Endothelial cell of umbilical vein (primary cell): ENCODE measurements at regions of chr1 and their contacts with region 1.

Region 1: DNA sequence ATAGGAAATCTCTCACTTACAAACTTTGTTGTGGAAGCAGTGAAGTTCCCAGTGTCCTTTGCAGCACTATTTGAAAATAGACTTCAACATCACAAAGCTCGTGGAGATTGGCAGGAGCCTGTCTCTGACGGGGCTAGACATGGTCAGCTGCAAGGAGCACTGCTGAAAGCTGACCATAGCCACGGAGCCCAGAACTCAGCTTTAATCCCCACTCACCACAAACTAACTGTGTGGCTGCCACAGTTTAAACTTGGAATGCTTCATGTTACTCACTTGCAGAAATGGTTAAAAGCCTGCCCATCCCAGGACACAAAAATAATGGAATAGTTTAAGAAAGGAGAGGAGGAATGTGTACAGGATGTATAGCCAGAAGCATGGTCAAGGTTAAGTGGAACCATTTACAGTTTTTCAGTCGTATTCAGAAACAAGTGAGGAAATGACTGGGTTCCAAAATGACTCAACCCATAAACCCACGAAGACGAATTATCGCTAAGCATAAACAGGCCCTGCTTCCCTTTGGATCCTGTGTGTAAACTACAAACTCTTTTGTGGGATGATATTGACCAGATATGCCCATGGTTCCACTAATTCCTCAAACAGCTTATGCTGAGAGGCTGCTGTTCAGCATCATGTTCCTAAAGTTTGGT is 18.2 kb downstream of the DNALI1 start:
- DNase-seq: peak; percentile 81
- H3K4me3 ChIP-seq: no peak overlapping the region
- H3K27ac ChIP-seq: peak overlapping the region; percentile 72
- H3K4me1 ChIP-seq: peaks cover 36% of the 10 kb centered on the region
- H3K27me3 ChIP-seq: no peaks in the 10 kb centered on the region
- CTCF ChIP-seq: no peak
- POLR2A ChIP-seq: no peak

Region 2: DNA sequence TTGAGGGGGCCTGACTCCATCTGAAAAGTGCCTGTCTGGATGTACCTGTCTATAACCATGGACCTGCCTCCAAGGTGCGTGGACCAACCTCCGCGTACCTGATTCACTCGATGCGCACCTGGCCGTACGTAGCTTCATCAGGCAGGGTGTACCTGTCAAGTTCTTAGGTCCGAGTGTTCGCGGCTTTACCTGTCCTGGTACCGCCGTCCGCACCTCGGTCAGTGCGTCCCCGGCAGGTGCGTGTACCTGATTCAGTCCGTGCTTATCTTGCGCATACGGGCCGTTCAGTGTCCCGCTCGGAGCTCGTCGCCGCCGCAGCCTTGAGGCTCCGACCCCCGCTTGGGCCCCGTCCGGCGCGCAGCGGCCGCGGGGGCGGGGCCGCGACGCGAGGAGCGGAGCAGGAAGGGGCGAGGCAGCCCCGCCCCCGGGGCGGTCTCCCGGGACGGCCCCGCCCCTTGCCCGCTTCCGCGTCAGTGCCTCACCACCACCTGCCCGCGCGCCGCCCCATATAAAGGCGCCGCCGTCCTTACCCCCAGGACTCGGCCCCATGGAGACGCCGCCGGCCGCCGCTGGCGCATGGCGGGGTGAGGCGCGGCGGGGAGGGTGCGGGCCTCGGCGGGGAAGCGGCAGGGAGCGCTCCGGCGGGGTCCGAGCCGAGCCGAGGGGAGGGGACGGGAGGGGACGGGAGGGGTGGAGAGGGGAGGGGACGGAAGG is 100.8 kb before region 1 on chr1 and contains the start of gene ZC3H12A:
- CTCF ChIA-PET with region 1: no interaction called
- POLR2A ChIA-PET with region 1: no interaction called
- dilution Hi-C with region 1: no loop called
- intact Hi-C with region 1: no loop called
- DNase-seq: peak; percentile 84
- H3K4me3 ChIP-seq: peak within 1 kb of the TSS; percentile 47 to 69 (median 55)
- H3K27ac ChIP-seq: peak within 1 kb of the TSS; percentile 65
- H3K4me1 ChIP-seq: peaks cover 72% of the 10 kb centered on the region
- H3K27me3 ChIP-seq: no peaks in the 10 kb centered on the region
- CTCF ChIP-seq: no peak
- POLR2A ChIP-seq: peak; percentile 97
- total RNA-seq, gene ZC3H12A: 6.3 and 7.5 TPM in 2 replicates

Region 3: DNA sequence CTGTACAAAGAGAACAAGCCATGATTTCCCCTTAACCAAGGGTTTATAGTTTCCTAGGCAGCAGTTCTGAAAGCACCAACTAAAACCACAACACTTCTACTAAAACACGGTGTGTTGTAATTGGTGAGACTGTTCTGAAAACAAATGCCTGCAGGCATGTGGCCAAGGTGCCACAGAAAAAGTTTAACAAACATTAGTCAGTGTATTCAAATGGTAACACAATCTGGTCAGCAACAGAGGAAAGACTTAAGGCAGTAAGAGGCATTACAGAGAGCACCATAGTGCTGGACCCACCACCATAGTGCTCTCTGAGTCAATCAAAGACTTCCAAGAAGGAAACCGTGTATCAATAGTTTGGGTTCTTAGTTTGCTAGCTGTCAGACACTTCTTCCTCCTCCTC is 37.6 kb before region 1 on chr1:
- CTCF ChIA-PET with region 1: no interaction called
- POLR2A ChIA-PET with region 1: no interaction called
- dilution Hi-C with region 1: no loop called
- intact Hi-C with region 1: loop called (anchors 1 kb)
- DNase-seq: no peak
- H3K4me3 ChIP-seq: no peak overlapping the region
- H3K27ac ChIP-seq: no peak overlapping the region
- H3K4me1 ChIP-seq: peaks cover 17% of the 10 kb centered on the region
- H3K27me3 ChIP-seq: no peaks in the 10 kb centered on the region
- CTCF ChIP-seq: no peak
- POLR2A ChIP-seq: no peak

Region 4: DNA sequence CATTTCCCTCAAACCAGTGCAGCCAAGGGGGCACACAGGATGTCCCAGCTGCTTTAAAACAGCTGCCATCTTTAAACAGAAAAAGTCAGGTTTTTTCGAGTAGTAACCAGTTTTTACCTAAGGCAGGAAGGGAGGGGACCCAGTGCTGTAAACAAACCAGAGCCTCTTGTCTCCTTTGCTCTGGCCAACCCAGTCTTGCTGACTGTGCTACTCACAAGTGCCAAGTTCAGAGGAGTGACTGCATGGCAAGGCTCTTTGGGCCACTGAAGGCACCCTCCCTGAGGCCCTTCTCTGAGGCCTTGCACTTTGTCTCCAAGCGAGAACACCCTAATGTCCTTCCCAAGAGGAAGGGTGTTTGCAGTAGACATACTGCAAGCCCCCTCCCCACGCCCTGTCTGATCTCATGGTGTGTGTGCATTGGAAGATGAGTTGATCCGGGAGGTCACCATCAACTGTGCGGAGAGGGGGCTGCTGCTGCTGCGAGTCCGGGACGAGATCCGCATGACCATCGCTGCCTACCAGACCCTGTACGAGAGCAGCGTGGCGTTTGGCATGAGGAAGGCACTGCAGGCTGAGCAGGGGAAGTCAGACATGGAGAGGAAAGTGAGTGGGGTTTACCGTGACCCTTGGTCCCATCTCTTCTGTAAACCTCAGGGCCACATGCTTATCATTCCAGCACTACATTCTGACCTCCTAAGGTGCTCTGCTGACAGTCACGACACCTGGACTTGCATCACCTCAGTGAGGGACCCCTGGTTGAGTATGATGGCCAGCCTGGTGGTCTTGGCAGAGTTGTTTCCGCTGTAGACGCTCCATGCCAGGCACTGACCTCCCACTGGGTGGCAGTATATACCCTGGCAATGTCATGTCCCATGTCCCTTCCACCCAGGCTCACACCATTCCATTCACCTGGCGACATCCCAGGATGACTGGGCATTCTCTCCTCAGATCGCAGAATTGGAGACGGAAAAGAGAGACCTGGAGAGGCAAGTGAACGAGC is 13.5 kb before region 1 on chr1:
- CTCF ChIA-PET with region 1: interaction called, 6 read pairs
- POLR2A ChIA-PET with region 1: no interaction called
- dilution Hi-C with region 1: no loop called
- intact Hi-C with region 1: loop called (anchors 2 kb)
- DNase-seq: peak; percentile 15
- H3K4me3 ChIP-seq: no peak overlapping the region
- H3K27ac ChIP-seq: no peak overlapping the region
- H3K4me1 ChIP-seq: peaks cover 10% of the 10 kb centered on the region
- H3K27me3 ChIP-seq: no peaks in the 10 kb centered on the region
- CTCF ChIP-seq: peak; percentile 49 to 55
- POLR2A ChIP-seq: no peak

Region 5: GRCh38 chr1:37595440-37596319 is 20.7 kb after region 1 on chr1 and contains the start of gene GNL2:
- CTCF ChIA-PET with region 1: interaction called, 4 read pairs
- POLR2A ChIA-PET with region 1: no interaction called
- dilution Hi-C with region 1: no loop called
- intact Hi-C with region 1: loop called (anchors 1 kb)
- DNase-seq: peak; percentile 97
- H3K4me3 ChIP-seq: peak within 1 kb of the TSS; percentile 54 to 89 (median 75)
- H3K27ac ChIP-seq: peak within 1 kb of the TSS; percentile 76
- H3K4me1 ChIP-seq: peaks cover 17% of the 10 kb centered on the region
- H3K27me3 ChIP-seq: peaks cover 0 to 6% of the 10 kb centered on the region in 2 experiments
- CTCF ChIP-seq: no peak
- POLR2A ChIP-seq: peak; percentile 87
- total RNA-seq, gene GNL2: 55.5 and 57.1 TPM in 2 replicates

Region 6: GRCh38 chr1:38012363-38013226 is 437.6 kb after region 1 on chr1 and contains the start of gene UTP11:
- CTCF ChIA-PET with region 1: no interaction called
- POLR2A ChIA-PET with region 1: no interaction called
- dilution Hi-C with region 1: no loop called
- intact Hi-C with region 1: loop called (anchors 10 kb)
- DNase-seq: peak; percentile 99
- H3K4me3 ChIP-seq: peak within 1 kb of the TSS; percentile 27 to 81 (median 58)
- H3K27ac ChIP-seq: peak within 1 kb of the TSS; percentile 85
- H3K4me1 ChIP-seq: peaks cover 49% of the 10 kb centered on the region
- H3K27me3 ChIP-seq: no peaks in the 10 kb centered on the region
- CTCF ChIP-seq: no peak
- POLR2A ChIP-seq: peak; percentile 90
- total RNA-seq, gene UTP11: 54.1 and 60.1 TPM in 2 replicates